ENCODE measurements at regions of chr10 and their contacts with region 1.

Region 1: GRCh38 chr10:91758303-91759146 is 39.7 kb upstream of the TNKS2 start:
- DNase-seq: no peak
- H3K4me3 Mint-ChIP-seq: no peak overlapping the region
- H3K27ac Mint-ChIP-seq: no peak overlapping the region
- H3K4me1 Mint-ChIP-seq: peaks cover 6% of the 10 kb centered on the region
- H3K27me3 Mint-ChIP-seq: peaks cover 16% of the 10 kb centered on the region

Region 2: DNA sequence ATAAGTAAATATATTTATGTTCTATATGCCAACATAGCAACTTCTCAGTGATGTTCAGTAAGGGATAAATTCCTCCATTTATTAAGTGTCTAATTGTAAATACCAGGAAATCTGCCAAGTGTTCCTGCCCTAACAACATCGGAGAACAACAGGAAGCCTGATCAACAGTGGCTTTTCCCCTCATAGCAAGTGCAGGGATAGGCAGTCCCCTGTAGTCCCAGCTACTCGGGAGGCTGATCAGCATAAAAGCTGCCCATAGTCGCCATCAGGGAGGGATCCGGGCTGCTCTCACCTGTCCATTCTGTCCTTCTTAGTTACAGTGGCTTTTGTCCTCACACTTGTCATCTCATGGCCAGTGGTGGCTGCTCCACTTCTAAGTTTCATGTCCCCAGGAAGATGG is 674.1 kb after region 1 on chr10:
- CTCF ChIA-PET with region 1: interaction called, 4 read pairs
- intact Hi-C with region 1: loop called (anchors 1 kb)
- DNase-seq: no peak
- H3K4me3 Mint-ChIP-seq: no peak overlapping the region
- H3K27ac Mint-ChIP-seq: no peak overlapping the region
- H3K4me1 Mint-ChIP-seq: no peaks in the 10 kb centered on the region
- H3K27me3 Mint-ChIP-seq: no peaks in the 10 kb centered on the region

Measured in activated naive CD4-positive, alpha-beta T cell treated with anti-CD3 and anti-CD28 coated beads for 36 hours (primary cell).